Activated B cell treated with CpG ODN at 0.5 μM for 24 hours (primary cell): ENCODE measurements at regions of chr13 and their contacts with region 1.

Region 1: DNA sequence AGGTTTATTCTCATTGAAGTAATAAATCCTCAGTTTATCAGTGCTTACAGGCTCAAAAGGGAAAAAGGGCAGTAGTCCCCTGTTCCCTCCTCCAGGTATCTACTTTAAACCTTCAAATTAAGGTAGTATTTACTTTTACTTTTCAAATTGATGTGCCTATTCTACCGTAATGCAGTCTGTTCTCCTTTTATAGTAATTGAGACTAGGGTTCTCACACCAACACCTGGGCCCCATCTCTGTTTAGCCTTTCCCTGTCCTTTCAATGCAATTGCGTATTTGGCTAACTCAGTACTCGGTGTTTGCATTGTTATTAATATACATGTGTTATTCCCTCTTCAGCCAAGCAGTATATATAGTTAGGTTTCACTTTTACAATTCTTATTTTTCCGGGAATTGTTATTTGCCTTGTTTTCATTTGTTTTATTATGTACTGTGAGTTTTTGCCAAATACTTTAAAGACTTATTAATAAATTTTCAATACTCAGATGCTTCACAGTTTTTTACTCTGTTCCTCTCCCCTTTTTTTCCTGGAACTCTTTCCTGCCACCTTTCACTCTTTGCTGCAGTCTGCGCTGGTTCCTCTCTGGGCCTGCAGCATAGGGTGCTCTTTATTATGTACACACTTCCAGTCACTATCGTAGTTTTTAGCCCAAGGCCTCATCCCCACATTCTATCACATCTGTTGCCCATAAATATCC is 30.3 kb downstream of the USPL1 start:
- DNase-seq: no peak
- ATAC-seq: no peak
- H3K4me3 Mint-ChIP-seq: peak overlapping the region; percentile 42
- H3K27ac Mint-ChIP-seq: peak overlapping the region; percentile 80
- H3K4me1 Mint-ChIP-seq: peaks cover 25% of the 10 kb centered on the region
- H3K27me3 Mint-ChIP-seq: no peaks in the 10 kb centered on the region
- CTCF ChIP-seq: no peak

Region 2: DNA sequence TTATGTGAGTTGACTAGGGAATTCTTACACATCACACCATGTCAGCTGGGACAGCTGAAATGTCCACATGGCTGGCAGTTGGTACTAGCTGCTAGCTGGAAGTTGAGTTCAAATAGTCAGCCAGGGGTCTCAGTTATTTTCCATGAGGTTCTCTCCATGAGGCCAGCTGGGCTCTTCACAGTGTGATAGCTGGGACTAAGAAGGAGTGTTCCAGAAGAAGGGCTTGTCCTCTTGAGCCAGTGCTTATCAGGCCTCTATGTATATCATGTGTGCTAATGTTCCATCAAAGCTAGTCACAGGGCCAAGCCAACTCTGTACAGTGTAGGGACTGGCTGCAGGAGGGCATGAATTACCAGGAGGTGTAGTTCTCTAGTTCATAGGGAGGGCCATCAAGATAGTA is 18.4 kb before region 1 on chr13:
- CTCF ChIA-PET with region 1: no interaction called
- POLR2A ChIA-PET with region 1: interaction called, 3 read pairs
- intact Hi-C with region 1: loop called (anchors 2 kb)
- DNase-seq: no peak
- ATAC-seq: no peak
- H3K4me3 Mint-ChIP-seq: no peak overlapping the region
- H3K27ac Mint-ChIP-seq: peak overlapping the region; percentile 18
- H3K4me1 Mint-ChIP-seq: peaks cover 45% of the 10 kb centered on the region
- H3K27me3 Mint-ChIP-seq: no peaks in the 10 kb centered on the region
- CTCF ChIP-seq: no peak

Region 3: DNA sequence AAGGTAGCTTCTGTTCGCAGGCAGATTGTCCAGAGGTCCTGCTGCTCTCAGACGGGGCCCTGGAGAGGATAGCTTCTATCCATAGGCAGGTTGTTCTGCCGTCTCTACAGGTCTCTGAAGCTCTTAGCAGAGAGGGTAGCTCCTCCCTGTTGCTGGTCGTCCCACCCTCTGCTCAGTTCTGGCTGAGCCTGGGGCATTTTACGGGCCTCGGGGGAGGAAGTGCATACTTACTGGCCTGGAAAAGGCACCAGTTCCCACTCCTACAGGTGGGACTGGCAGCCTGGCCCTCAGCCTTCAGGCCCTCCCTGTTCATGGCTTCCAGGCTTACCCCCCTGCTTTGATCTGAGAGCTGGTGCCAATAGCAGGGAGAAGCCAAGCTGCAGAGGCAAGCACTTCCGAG is 12.0 kb after region 1 on chr13:
- CTCF ChIA-PET with region 1: no interaction called
- POLR2A ChIA-PET with region 1: interaction called, 4 read pairs
- intact Hi-C with region 1: loop called (anchors 1 kb)
- DNase-seq: no peak
- ATAC-seq: no peak
- H3K4me3 Mint-ChIP-seq: peak overlapping the region; percentile 53
- H3K27ac Mint-ChIP-seq: peak overlapping the region; percentile 84
- H3K4me1 Mint-ChIP-seq: peaks cover 5% of the 10 kb centered on the region
- H3K27me3 Mint-ChIP-seq: no peaks in the 10 kb centered on the region
- CTCF ChIP-seq: no peak